ENCODE measurements at regions of chr17 and their contacts with region 1.

Region 1: GRCh38 chr17:81676906-81677305 is 6.7 kb downstream of the ARL16 start:
- DNase-seq: no peak
- H3K4me3 ChIP-seq: no peak overlapping the region
- H3K27ac ChIP-seq: no peak overlapping the region
- H3K4me1 ChIP-seq: no peaks in the 10 kb centered on the region
- H3K27me3 ChIP-seq: no peaks in the 10 kb centered on the region; a peak in 1 of 7 replicates
- CTCF ChIP-seq: no peak
- EP300 ChIP-seq: no peak
- POLR2A ChIP-seq: peak in 1 of 2 experiments; percentile 23; a peak in 2 of 3 replicates
- RAD21 ChIP-seq: no peak

Region 2: GRCh38 chr17:81471804-81472456 is 205.0 kb before region 1 on chr17:
- CTCF ChIA-PET with region 1: no interaction called
- POLR2A ChIA-PET with region 1: no interaction called
- DNase-seq: no peak
- H3K4me3 ChIP-seq: no peak overlapping the region
- H3K27ac ChIP-seq: no peak overlapping the region
- H3K4me1 ChIP-seq: peaks cover 0 to 3% (median 0%) of the 10 kb centered on the region in 4 experiments; a peak in 2 of 7 replicates
- H3K27me3 ChIP-seq: peaks cover 0 to 4% (median 0%) of the 10 kb centered on the region in 4 experiments; a peak in 1 of 7 replicates
- CTCF ChIP-seq: peak in 1 of 3 experiments; percentile 2; a peak in 2 of 4 replicates
- EP300 ChIP-seq: no peak
- POLR2A ChIP-seq: no peak
- RAD21 ChIP-seq: peak in 1 of 2 experiments; percentile 37; a peak in 3 of 4 replicates

Region 3: DNA sequence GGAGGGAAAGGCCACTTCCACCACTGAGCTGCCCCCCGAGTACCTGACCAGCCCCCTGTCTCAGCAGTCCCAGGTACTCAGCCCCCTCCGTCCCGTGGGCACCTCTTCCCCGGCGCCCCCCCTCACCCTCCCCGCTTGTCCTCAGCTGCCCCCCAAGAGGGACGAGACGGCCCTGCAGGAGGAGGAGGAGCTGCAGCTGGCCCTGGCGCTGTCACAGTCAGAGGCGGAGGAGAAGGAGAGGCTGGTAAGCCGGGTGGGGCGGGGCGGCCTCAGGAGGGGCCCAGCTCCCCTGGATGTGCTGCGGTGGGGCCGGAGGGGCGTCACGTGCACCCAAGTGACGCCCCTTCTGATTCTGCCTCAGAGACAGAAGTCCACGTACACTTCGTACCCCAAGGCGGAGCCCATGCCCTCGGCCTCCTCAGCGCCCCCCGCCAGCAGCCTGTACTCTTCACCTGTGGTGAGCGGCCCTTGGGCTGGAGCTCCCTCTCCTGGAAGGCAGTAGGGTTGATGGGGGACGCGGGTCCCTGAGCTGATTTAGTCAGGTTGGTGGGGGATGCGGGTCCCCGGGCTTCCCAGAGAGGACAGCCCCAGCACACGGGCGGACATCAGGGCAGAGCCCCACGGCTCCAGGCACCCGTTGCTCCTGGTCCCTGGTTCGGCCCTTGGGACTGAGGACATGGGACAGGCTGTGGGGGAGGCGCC is 16.8 kb after region 1 on chr17:
- CTCF ChIA-PET with region 1: interaction called, 20 read pairs
- POLR2A ChIA-PET with region 1: interaction called, 100 read pairs
- DNase-seq: peak in 1 of 2 experiments; percentile 67
- H3K4me3 ChIP-seq: no peak overlapping the region
- H3K27ac ChIP-seq: no peak overlapping the region
- H3K4me1 ChIP-seq: no peaks in the 10 kb centered on the region
- H3K27me3 ChIP-seq: no peaks in the 10 kb centered on the region
- CTCF ChIP-seq: peak; percentile 55 to 88 (median 59)
- EP300 ChIP-seq: no peak
- POLR2A ChIP-seq: no peak
- RAD21 ChIP-seq: peak; percentile 42 to 62; a peak in 3 of 4 replicates